HCT116 (cell line): ENCODE measurements at regions of chr4 and their contacts with region 1.

Region 1: DNA sequence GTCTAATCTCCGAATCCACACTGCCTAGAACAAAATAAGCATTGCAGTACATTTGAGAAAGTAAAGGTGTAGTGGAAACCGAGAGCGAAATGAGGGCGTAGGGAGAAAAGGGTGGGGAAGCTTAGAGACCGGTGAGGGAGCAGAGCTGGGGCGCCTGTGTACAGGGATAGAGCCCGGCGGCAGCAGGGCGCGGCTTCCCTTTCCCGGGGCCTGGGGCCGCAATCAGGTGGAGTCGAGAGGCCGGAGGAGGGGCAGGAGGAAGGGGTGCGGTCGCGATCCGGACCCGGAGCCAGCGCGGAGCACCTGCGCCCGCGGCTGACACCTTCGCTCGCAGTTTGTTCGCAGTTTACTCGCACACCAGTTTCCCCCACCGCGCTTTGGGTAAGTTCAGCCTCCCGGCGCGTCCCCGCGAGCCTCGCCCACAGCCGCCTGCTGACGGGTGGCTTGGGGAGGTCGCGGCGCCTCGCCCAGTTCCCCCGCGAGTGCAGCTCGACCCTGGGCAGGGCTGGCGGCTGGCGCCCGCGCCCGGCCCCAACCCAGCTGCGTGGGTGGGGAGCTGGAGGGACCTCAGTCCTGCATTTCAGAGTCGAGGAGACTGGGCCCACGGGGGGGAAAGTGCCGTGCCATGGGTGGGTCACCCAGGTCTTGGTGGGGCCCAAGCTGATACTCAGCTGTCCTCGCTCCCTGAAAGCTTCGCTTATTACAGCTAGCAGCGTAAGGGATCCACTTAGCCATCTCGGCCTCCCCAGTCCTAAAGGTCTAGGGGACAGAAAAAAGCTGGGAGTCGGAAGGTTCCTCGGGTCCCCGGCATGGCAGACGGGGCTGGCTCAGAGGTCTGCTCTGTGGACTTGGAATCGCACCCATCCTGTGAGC is at the start of gene ANXA3:
- DNase-seq: no peak
- ATAC-seq: peak; percentile 68
- H3K4me3 ChIP-seq: peak within 1 kb of the TSS; percentile 61 to 71
- H3K27ac ChIP-seq: peak within 1 kb of the TSS; percentile 100
- H3K4me1 ChIP-seq: peaks cover 50 to 63% of the 10 kb centered on the region in 2 experiments
- H3K27me3 ChIP-seq: no peaks in the 10 kb centered on the region
- CTCF ChIP-seq: no peak
- POLR2A ChIP-seq: no peak
- RAD21 ChIP-seq: no peak
- total RNA-seq, gene ANXA3: 158 TPM

Region 2: GRCh38 chr4:77075869-77076799 is 1475.6 kb before region 1 on chr4 and contains the start of gene CCNI:
- CTCF ChIA-PET with region 1: no interaction called
- POLR2A ChIA-PET with region 1: no interaction called
- RAD21 ChIA-PET with region 1: no interaction called
- intact Hi-C with region 1: loop called (anchors 5 kb)
- DNase-seq: peak; percentile 95
- ATAC-seq: peak; percentile 84
- H3K4me3 ChIP-seq: peak within 1 kb of the TSS; percentile 78 to 80
- H3K27ac ChIP-seq: peak within 1 kb of the TSS; percentile 72
- H3K4me1 ChIP-seq: peaks cover 14 to 21% of the 10 kb centered on the region in 2 experiments
- H3K27me3 ChIP-seq: no peaks in the 10 kb centered on the region
- CTCF ChIP-seq: no peak
- POLR2A ChIP-seq: peak; percentile 95
- RAD21 ChIP-seq: no peak
- total RNA-seq, gene CCNI: 208 TPM

Region 3: DNA sequence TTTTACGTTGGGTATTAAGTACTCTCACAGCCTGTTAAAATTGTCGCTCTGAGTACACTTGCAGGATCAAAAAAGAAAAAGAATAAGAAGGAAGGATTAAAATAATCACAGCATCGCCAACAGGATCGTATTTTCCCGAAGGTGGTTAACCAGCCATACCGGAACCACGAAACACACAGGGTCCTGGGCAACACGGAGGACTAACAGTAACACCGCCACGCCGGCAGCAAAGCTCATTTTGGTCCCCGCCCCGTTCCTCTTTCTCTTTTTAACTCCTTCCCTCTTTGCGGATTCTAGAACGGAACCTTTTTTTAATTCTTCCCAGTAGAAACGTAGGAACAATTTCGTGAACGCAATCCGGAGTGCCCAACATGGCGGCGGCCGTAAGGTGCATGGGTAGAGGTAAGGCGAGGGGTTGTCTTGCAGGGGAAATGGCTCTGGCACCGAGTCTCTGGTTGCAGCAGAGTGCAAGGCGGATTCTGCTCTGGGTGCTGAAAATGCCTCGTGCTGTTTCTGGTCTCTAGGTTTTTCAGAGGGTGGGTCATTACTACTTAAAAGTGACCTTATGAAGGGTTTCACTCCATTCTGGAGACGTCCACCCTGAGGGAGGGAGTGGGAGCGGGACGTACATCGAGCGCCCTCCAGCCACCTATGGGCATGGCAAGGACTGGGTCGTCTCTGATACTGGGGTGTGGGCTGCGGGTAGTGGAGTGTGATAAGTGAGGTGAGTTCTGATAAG is 689.1 kb before region 1 on chr4 and contains the start of gene MRPL1:
- CTCF ChIA-PET with region 1: no interaction called
- POLR2A ChIA-PET with region 1: no interaction called
- RAD21 ChIA-PET with region 1: no interaction called
- intact Hi-C with region 1: loop called (anchors 2 kb)
- DNase-seq: peak; percentile 95
- ATAC-seq: peak; percentile 88
- H3K4me3 ChIP-seq: peak within 1 kb of the TSS; percentile 76 to 97
- H3K27ac ChIP-seq: peak within 1 kb of the TSS; percentile 80
- H3K4me1 ChIP-seq: peaks cover 6 to 17% of the 10 kb centered on the region in 2 experiments; a peak in 3 of 4 replicates
- H3K27me3 ChIP-seq: no peaks in the 10 kb centered on the region
- CTCF ChIP-seq: 0 out of 6 replicates have a peak, but pooled peaks of 1 of the 3 experiments have one; percentile 3
- POLR2A ChIP-seq: peak; percentile 87
- RAD21 ChIP-seq: no peak
- total RNA-seq, gene MRPL1: 54.9 TPM

Region 4: DNA sequence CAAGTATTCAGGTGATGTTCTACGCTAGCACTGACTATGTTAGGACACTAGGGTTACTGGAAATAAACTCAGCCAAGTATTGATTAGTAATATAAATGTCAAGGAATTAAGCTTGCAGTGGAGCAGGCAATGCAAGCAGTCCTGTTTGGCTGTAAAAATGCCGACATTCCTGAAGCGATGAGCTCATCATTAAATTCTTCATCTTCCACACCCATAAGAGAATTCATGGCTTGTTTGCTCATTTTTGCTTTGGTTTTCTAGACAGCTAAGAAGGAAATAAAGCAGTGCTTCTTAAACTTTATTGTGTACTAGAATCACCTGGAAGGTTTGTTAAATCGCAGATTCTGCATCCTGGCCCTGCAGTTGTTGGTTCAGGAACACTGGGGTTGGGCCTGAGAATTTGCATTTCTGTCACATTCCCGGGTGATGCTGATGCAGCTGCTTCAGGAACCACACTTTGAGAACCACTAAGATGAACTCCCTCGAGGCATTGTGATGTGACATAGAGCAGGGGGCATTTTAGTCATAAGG is 17.6 kb after region 1 on chr4:
- CTCF ChIA-PET with region 1: no interaction called
- POLR2A ChIA-PET with region 1: interaction called, 17 read pairs
- RAD21 ChIA-PET with region 1: no interaction called
- intact Hi-C with region 1: no loop called
- DNase-seq: peak; percentile 87
- ATAC-seq: peak; percentile 50
- H3K4me3 ChIP-seq: peak overlapping the region in 1 of 2 experiments; percentile 43; a peak in 2 of 4 replicates
- H3K27ac ChIP-seq: peak overlapping the region; percentile 100
- H3K4me1 ChIP-seq: peaks cover 64% of the 10 kb centered on the region in 2 experiments
- H3K27me3 ChIP-seq: no peaks in the 10 kb centered on the region
- CTCF ChIP-seq: no peak
- POLR2A ChIP-seq: no peak
- RAD21 ChIP-seq: no peak